ENCODE measurements at regions of chr1 and their contacts with region 1.

Region 1: GRCh38 chr1:116360429-116361173 is 12.4 kb upstream of the ATP1A1 start:
- DNase-seq: no peak
- H3K4me3 ChIP-seq: no peak overlapping the region
- H3K27ac ChIP-seq: no peak overlapping the region
- H3K4me1 ChIP-seq: no peaks in the 10 kb centered on the region
- H3K27me3 ChIP-seq: no peaks in the 10 kb centered on the region
- CTCF ChIP-seq: peak in 1 of 3 experiments; percentile 22
- POLR2A ChIP-seq: no peak

Region 2: GRCh38 chr1:116485071-116485735 is 124.6 kb after region 1 on chr1:
- intact Hi-C with region 1: loop called (anchors 10 kb)
- DNase-seq: no peak
- H3K4me3 ChIP-seq: no peak overlapping the region
- H3K27ac ChIP-seq: no peak overlapping the region
- H3K4me1 ChIP-seq: peaks cover 7% of the 10 kb centered on the region
- H3K27me3 ChIP-seq: no peaks in the 10 kb centered on the region
- CTCF ChIP-seq: peak; percentile 65 to 91 (median 90)
- POLR2A ChIP-seq: no peak